ENCODE measurements at regions of chr18 and their contacts with region 1.

Region 1: GRCh38 chr18:3245853-3246634 is 1.6 kb upstream of the MYL12A start:
- DNase-seq: peak; percentile 78
- CTCF ChIP-seq: peak; percentile 94

Region 2: GRCh38 chr18:2932247-2933181 is 313.5 kb before region 1 on chr18:
- CTCF ChIA-PET with region 1: interaction called, 73 read pairs
- POLR2A ChIA-PET with region 1: no interaction called
- DNase-seq: peak; percentile 74
- CTCF ChIP-seq: peak; percentile 54

Region 3: DNA sequence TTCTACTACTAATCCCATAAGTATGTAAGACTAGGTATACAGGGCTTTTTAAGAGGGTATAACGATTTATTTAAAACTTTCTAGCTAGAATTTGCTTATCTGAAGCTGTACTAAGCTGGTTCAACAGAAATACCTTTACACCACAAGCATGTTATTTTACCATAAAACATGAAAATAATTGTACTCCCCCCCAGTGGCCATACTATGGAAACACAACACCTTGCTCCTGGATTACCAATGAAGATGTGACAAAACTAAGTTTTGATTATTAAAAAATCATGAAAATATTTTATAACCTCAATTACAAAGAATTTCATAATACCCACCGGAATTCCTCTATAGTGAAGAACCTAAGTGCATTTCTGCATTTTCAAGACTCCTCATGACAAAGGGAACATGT is 260.4 kb before region 1 on chr18:
- CTCF ChIA-PET with region 1: interaction called, 15 read pairs
- POLR2A ChIA-PET with region 1: no interaction called
- DNase-seq: peak; percentile 44
- CTCF ChIP-seq: peak; percentile 51

Region 4: DNA sequence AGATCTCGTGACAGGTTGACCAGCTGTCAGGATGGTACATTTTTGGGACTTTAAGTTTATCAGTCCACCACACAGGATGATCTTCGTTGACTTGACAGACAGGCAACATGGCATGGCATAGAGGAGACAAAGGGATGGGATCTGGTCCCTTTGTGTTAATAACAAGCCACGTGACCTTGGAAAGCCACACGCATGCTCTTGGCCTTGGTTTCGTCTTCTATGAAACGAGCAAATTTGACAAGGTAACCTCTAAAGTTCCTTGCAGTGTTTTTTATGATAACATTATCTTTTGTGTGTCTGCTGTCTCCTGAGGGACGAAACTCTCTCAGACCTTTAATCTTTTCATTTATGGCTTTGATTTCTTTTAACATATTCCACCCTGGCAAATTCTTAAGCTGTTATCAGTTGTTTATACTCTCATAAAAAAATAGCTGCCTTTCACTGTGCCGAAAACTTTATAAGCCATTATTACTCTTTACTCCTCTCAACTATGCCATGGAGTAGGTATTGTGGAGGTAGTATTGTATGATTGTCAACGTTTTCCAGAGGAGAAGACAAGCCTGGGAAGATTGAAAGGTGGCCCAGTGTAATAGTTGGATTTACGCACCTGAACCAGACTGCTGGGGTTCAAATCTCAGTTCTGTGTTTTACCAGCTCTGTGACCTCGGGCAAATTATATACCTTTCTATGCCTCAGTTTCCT is 107.6 kb before region 1 on chr18:
- CTCF ChIA-PET with region 1: interaction called, 10 read pairs
- POLR2A ChIA-PET with region 1: no interaction called
- DNase-seq: no peak
- CTCF ChIP-seq: no peak

Region 5: DNA sequence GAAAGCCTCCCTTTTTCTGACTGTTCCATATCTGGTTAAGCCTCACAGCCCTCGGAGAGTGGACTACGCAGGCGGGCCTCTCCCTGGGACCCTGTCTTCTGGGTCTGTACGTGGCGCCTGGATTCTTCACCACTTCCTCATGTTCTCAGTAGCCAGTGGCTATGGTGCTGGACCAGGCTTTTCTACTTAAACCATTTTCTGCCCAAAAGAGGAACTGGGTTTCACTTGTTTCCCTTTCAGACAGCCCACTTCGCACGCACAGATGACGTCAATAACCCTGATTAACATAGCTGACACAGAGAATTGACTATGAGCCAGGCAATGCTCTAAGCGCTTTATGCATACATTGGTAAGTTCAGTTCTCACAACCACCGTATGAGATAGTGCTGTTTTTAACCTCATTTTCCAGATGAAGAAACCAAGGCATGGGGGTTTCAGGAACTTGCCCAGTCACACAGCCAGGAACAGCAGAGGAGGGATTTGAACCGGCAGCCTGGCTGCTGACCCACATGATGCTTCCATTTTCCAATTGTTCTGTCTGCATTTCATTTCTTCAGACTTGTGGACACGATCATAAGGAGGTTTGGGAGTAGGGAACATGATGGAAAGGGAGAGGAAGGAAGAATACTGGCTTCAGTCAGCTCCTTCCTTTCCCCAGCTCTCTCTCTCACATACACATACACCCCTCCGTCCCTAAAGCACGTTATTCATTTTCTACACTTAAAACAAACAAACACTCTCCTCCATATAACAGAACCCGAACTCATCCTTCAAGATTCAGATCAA is 67.9 kb before region 1 on chr18:
- CTCF ChIA-PET with region 1: interaction called, 32 read pairs
- POLR2A ChIA-PET with region 1: interaction called, 3 read pairs
- DNase-seq: peak; percentile 82
- CTCF ChIP-seq: no peak

Region 6: GRCh38 chr18:3256693-3257626 is 10.9 kb after region 1 on chr18:
- CTCF ChIA-PET with region 1: interaction called, 16 read pairs
- POLR2A ChIA-PET with region 1: interaction called, 3 read pairs
- DNase-seq: no peak
- CTCF ChIP-seq: no peak

Region 7: GRCh38 chr18:3511922-3512372 is 265.9 kb after region 1 on chr18:
- CTCF ChIA-PET with region 1: no interaction called
- POLR2A ChIA-PET with region 1: no interaction called
- DNase-seq: no peak
- CTCF ChIP-seq: no peak

Region 8: GRCh38 chr18:3665780-3666525 is 419.9 kb after region 1 on chr18:
- CTCF ChIA-PET with region 1: interaction called, 10 read pairs
- POLR2A ChIA-PET with region 1: no interaction called
- DNase-seq: peak; percentile 71
- CTCF ChIP-seq: peak; percentile 86